ENCODE measurements at regions of chr2 and their contacts with region 1.

Region 1: GRCh38 chr2:222969491-222969890 is 82.5 kb upstream of the KCNE4 start:
- DNase-seq: no peak
- H3K4me3 ChIP-seq: no peak overlapping the region
- H3K27ac ChIP-seq: no peak overlapping the region
- H3K4me1 ChIP-seq: peaks cover 6 to 7% of the 10 kb centered on the region in 2 experiments; a peak in 3 of 4 replicates
- H3K27me3 ChIP-seq: no peaks in the 10 kb centered on the region
- CTCF ChIP-seq: no peak
- EP300 ChIP-seq: no peak
- RAD21 ChIP-seq: no peak

Region 2: GRCh38 chr2:222959336-222959735 is 10.2 kb before region 1 on chr2:
- CTCF ChIA-PET with region 1: interaction called, 13 read pairs
- POLR2A ChIA-PET with region 1: no interaction called
- DNase-seq: no peak
- H3K4me3 ChIP-seq: no peak overlapping the region
- H3K27ac ChIP-seq: peak overlapping the region in 1 of 2 experiments; percentile 49; a peak in 2 of 4 replicates
- H3K4me1 ChIP-seq: peaks cover 0 to 16% of the 10 kb centered on the region in 2 experiments; a peak in 3 of 4 replicates
- H3K27me3 ChIP-seq: no peaks in the 10 kb centered on the region
- CTCF ChIP-seq: peak; percentile 53
- EP300 ChIP-seq: peak in 1 of 2 experiments; percentile 11; a peak in 1 of 4 replicates
- RAD21 ChIP-seq: peak; percentile 13; the same call in 1 of the 2 replicates

Region 3: DNA sequence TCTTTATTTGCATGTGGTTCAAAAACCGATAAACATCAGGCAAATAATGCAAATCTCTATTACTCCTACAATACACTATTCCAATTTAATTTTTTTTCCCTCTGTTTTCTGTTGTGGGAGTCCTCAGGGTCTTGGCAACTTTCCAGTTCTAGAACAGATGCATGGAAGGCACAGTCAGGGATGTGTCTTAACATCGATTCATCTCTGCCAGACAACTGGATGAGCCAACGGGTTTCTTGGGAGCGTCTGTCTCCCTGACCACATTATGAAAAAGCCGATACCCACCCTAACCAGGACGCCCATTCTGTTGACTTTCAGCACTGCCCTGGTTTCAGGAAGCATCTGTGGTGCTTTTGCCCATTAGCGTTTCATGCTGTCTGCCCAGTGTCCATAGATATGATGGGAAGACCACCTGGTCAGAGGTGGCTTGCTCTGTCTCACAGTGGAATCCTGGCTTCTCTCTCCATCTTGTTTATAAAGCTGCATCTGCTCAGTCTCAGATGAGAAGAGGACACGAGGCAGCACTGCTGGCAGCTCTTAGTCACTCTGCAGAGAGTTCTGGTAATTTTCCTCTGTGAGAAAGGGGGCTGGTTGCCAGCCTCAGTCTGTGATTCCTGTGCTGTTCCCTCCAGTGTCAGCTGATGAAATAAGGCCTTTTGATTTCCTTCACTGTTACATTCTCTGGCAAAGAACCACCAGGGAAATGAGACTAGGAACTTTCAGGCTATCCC is 24.6 kb after region 1 on chr2:
- CTCF ChIA-PET with region 1: interaction called, 17 read pairs
- POLR2A ChIA-PET with region 1: no interaction called
- DNase-seq: peak; percentile 47
- H3K4me3 ChIP-seq: peak overlapping the region; percentile 6 to 14; a peak in 2 of 4 replicates
- H3K27ac ChIP-seq: peak overlapping the region; percentile 98 to 99
- H3K4me1 ChIP-seq: peaks cover 22% of the 10 kb centered on the region in 2 experiments
- H3K27me3 ChIP-seq: no peaks in the 10 kb centered on the region
- CTCF ChIP-seq: no peak
- EP300 ChIP-seq: peak; percentile 57 to 81
- RAD21 ChIP-seq: peak; percentile 32; the same call in 1 of the 2 replicates

Region 4: GRCh38 chr2:223247136-223247535 is 277.6 kb after region 1 on chr2:
- CTCF ChIA-PET with region 1: interaction called, 10 read pairs
- POLR2A ChIA-PET with region 1: no interaction called
- DNase-seq: peak; percentile 8
- H3K4me3 ChIP-seq: no peak overlapping the region; a peak in 1 of 4 replicates
- H3K27ac ChIP-seq: no peak overlapping the region
- H3K4me1 ChIP-seq: no peaks in the 10 kb centered on the region
- H3K27me3 ChIP-seq: no peaks in the 10 kb centered on the region
- CTCF ChIP-seq: peak; percentile 63
- EP300 ChIP-seq: no peak
- RAD21 ChIP-seq: peak; percentile 75

Region 5: DNA sequence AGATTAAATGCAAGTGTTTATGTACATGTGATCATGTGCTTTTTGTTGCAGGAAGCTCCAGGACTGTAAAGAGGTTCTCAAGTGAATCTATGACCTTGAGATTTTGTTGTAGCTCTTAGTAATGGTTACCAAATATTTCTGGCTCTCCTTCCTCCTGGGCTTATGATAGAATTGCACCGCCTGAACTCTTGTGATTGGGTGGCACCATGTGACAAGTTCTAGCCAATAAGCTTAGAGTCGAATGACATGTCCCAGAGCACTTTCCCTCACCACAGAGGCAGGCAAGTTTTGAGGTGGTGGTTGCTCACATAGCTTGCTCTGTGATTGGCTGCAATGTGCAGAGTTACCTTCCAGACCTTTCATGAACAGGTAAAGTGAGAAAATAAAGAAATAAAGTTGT is 641.6 kb after region 1 on chr2:
- CTCF ChIA-PET with region 1: interaction called, 12 read pairs
- POLR2A ChIA-PET with region 1: no interaction called
- DNase-seq: no peak
- H3K4me3 ChIP-seq: no peak overlapping the region
- H3K27ac ChIP-seq: no peak overlapping the region
- H3K4me1 ChIP-seq: peaks cover 7 to 8% of the 10 kb centered on the region in 2 experiments
- H3K27me3 ChIP-seq: no peaks in the 10 kb centered on the region
- CTCF ChIP-seq: no peak
- EP300 ChIP-seq: no peak
- RAD21 ChIP-seq: no peak